ENCODE measurements at regions of chr4 and their contacts with region 1.

Region 1: GRCh38 chr4:148261848-148262247 is 180.4 kb downstream of the NR3C2 start:
- DNase-seq: peak; percentile 51
- ATAC-seq: peak; percentile 90
- H3K4me3 ChIP-seq: no peak overlapping the region
- H3K27ac ChIP-seq: peak overlapping the region; percentile 10
- H3K4me1 ChIP-seq: peaks cover 12% of the 10 kb centered on the region
- H3K27me3 ChIP-seq: no peaks in the 10 kb centered on the region
- CTCF ChIP-seq: no peak

Region 2: DNA sequence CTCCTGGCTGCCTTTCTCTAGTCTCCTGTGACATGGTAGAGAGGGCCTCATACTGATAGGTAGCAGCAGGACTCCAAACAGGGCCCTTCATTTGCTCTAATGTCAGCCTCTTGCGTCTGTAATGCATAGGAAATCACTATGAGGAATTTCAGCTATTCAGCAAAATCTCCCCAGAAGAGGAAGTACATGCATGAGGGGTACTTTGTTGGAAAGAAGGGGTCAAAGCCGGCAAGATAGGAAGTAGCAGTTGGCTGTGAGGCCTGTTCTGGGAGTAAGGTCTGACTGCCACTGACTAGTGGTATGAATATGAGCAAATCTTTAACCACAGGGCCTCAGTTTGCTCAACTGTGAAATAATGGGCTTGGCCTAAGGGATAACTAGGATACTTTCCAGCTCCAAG is 246.8 kb before region 1 on chr4:
- CTCF ChIA-PET with region 1: no interaction called
- POLR2A ChIA-PET with region 1: no interaction called
- intact Hi-C with region 1: loop called (anchors 10 kb)
- DNase-seq: no peak
- ATAC-seq: no peak
- H3K4me3 ChIP-seq: no peak overlapping the region
- H3K27ac ChIP-seq: no peak overlapping the region
- H3K4me1 ChIP-seq: no peaks in the 10 kb centered on the region
- H3K27me3 ChIP-seq: no peaks in the 10 kb centered on the region
- CTCF ChIP-seq: no peak

Region 3: GRCh38 chr4:148366251-148366650 is 104.4 kb after region 1 on chr4:
- CTCF ChIA-PET with region 1: no interaction called
- POLR2A ChIA-PET with region 1: no interaction called
- intact Hi-C with region 1: no loop called
- DNase-seq: no peak
- ATAC-seq: no peak
- H3K4me3 ChIP-seq: no peak overlapping the region
- H3K27ac ChIP-seq: no peak overlapping the region
- H3K4me1 ChIP-seq: no peaks in the 10 kb centered on the region
- H3K27me3 ChIP-seq: no peaks in the 10 kb centered on the region
- CTCF ChIP-seq: no peak

Region 4: GRCh38 chr4:148425327-148426110 is 163.7 kb after region 1 on chr4:
- CTCF ChIA-PET with region 1: no interaction called
- POLR2A ChIA-PET with region 1: no interaction called
- intact Hi-C with region 1: loop called (anchors 10 kb)
- DNase-seq: no peak
- ATAC-seq: no peak
- H3K4me3 ChIP-seq: no peak overlapping the region
- H3K27ac ChIP-seq: no peak overlapping the region
- H3K4me1 ChIP-seq: no peaks in the 10 kb centered on the region
- H3K27me3 ChIP-seq: no peaks in the 10 kb centered on the region
- CTCF ChIP-seq: peak; percentile 27; the same call in 1 of the 2 replicates

Measured in PC-3 (cell line).